ENCODE measurements at regions of chr1 and their contacts with region 1.

Region 1: GRCh38 chr1:7667625-7668218 is 103.4 kb upstream of the VAMP3 start:
- DNase-seq: peak; percentile 80
- H3K4me3 Mint-ChIP-seq: no peak overlapping the region
- H3K27ac Mint-ChIP-seq: no peak overlapping the region
- H3K4me1 Mint-ChIP-seq: no peaks in the 10 kb centered on the region
- H3K27me3 Mint-ChIP-seq: no peaks in the 10 kb centered on the region

Region 2: DNA sequence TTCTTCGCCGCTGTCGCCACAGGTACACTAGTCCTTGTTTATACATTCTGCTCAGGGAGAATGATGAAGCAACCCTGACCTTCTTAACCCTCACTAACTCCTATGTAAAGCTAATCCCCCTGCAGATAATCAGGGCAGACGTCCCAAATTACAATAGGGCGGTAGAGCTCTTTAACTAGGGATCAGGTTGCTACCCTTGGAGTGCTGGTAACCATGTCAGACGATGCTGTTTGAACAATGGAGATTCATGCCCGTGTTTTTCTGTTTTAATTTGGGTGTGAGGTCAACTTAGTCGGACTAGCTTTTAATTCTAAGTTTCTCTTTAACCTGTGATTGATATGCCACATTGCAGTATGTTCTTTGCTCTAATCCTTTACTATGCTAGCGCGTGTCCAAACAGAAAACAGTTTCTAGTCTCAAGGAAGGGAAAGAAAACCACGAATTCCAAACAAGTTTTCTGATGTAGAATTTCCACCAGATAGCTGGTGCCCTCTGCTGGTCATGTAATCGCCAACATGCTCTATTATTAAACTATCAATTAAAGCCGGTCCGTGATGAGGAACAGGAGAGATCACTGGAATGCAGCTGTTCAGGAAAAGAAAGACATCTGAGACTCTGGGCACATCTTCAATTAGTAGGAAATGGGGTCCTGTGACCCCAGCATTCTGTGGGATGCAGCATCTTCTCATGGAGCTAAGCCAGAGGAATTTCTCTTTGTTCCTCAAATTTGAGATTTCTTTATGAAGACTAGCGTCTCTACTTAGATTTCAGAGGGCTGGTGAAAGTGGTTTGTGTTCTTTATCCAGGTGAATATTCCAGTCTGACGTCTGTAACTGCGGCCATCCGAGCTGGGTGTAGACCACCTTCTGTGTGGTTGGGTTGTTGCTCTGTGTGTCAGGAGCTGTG is 85.0 kb after region 1 on chr1:
- CTCF ChIA-PET with region 1: interaction called, 45 read pairs
- POLR2A ChIA-PET with region 1: no interaction called
- DNase-seq: peak; percentile 51
- H3K4me3 Mint-ChIP-seq: no peak overlapping the region
- H3K27ac Mint-ChIP-seq: no peak overlapping the region
- H3K4me1 Mint-ChIP-seq: peaks cover 24% of the 10 kb centered on the region
- H3K27me3 Mint-ChIP-seq: peaks cover 19% of the 10 kb centered on the region